ENCODE measurements at regions of chr12 and their contacts with region 1.

Region 1: DNA sequence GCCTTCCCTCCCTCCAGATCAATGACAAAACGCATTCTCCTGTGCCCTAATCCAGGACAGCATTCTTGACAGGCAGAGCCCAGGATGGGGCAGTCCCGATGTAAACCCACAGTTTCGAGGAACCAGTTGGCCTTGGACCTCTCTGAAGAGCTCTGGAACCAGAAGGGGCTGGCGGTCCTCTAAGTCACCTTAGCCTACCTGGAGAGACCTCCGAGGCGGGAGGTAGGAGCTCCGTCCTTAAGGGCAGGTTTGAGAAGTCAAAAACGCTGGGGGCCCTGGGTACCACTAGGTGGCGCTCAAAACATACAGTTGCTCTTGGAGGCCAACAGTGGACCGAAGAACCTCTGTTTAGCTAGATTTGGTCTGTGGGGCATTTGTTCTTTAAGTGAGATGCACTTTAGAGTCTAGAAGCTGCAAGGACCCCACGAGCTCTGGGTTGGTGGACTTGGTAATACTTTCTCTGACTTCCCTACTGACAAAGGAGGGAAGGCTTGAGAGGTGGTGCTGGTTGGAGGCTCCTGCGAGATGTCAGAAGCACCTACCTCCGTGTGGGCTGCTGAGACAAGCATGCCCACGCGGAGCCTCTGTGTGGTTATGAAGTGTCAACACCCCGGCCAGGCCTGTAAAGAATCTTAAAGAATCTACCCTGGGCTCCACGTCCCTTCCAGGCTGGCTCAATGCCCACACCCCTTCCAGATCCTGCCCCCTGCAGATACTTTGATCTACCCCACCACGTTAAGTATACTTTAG is 74.8 kb upstream of the CHST11 start:
- DNase-seq: peak; percentile 82 to 90 (median 85)
- H3K4me3 ChIP-seq: peak overlapping the region in 3 of 7 experiments; percentile 4 to 34 (median 32)
- H3K27ac ChIP-seq: no peak overlapping the region
- H3K4me1 ChIP-seq: peaks cover 3 to 9% (median 6%) of the 10 kb centered on the region in 4 experiments
- H3K27me3 ChIP-seq: no peaks in the 10 kb centered on the region

Region 2: DNA sequence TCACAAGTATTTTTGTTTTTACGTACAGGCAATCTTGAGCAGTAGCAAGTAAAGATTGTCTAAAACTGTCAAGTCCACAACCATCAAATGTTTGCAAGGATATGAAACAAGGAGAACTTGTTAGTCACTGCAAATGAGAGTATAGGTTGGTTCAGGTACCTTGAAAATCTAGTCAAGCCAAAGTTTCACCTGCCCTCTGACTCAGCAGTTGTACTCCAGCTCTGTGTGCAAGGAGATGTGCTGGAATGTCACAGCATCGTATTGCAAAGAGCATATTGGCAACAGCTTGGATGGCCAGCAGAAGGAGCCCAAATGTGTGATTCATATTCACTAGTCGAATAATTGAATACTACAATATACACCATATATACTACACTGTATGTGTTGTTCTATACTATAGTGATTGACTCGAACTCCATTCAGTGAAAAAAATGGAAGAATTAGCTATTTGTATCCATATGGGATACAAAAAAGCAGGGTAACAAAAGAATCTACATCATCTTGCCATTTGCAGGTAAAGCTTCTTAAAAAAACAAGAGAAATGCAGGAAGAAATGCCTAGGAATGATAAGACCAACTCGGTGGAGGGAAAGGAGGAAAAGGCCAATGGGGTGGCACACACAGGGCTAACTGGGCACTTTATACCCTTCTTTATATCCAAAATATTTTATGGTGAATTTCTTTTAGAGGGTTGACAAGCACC is 34.4 kb before region 1 on chr12:
- CTCF ChIA-PET with region 1: no interaction called
- POLR2A ChIA-PET with region 1: no interaction called
- DNase-seq: no peak
- H3K4me3 ChIP-seq: no peak overlapping the region
- H3K27ac ChIP-seq: no peak overlapping the region
- H3K4me1 ChIP-seq: no peaks in the 10 kb centered on the region
- H3K27me3 ChIP-seq: no peaks in the 10 kb centered on the region

Region 3: GRCh38 chr12:104473374-104473983 is 91.6 kb after region 1 on chr12:
- CTCF ChIA-PET with region 1: interaction called, 11 read pairs
- POLR2A ChIA-PET with region 1: interaction called, 4 read pairs
- DNase-seq: peak in 2 of 3 donors; percentile 58 to 60
- H3K4me3 ChIP-seq: peak overlapping the region in 3 of 7 experiments; percentile 6 to 49 (median 43)
- H3K27ac ChIP-seq: peak overlapping the region in 1 of 2 experiments; percentile 41
- H3K4me1 ChIP-seq: peaks cover 41 to 90% (median 72%) of the 10 kb centered on the region in 4 experiments
- H3K27me3 ChIP-seq: no peaks in the 10 kb centered on the region

Region 4: GRCh38 chr12:104877123-104877705 is 495.3 kb after region 1 on chr12:
- CTCF ChIA-PET with region 1: interaction called, 31 read pairs
- POLR2A ChIA-PET with region 1: no interaction called
- DNase-seq: peak; percentile 45 to 64 (median 61)
- H3K4me3 ChIP-seq: no peak overlapping the region
- H3K27ac ChIP-seq: no peak overlapping the region
- H3K4me1 ChIP-seq: peaks cover 0 to 5% (median 0%) of the 10 kb centered on the region in 4 experiments
- H3K27me3 ChIP-seq: no peaks in the 10 kb centered on the region

Region 5: GRCh38 chr12:105053116-105053572 is 671.2 kb after region 1 on chr12:
- CTCF ChIA-PET with region 1: interaction called, 10 read pairs
- POLR2A ChIA-PET with region 1: no interaction called
- DNase-seq: peak; percentile 75 to 91 (median 89)
- H3K4me3 ChIP-seq: no peak overlapping the region
- H3K27ac ChIP-seq: no peak overlapping the region
- H3K4me1 ChIP-seq: no peaks in the 10 kb centered on the region
- H3K27me3 ChIP-seq: no peaks in the 10 kb centered on the region